Mucosa of descending colon (tissue), 3 donors: ENCODE measurements at regions of chr18 and their contacts with region 1.

Region 1: DNA sequence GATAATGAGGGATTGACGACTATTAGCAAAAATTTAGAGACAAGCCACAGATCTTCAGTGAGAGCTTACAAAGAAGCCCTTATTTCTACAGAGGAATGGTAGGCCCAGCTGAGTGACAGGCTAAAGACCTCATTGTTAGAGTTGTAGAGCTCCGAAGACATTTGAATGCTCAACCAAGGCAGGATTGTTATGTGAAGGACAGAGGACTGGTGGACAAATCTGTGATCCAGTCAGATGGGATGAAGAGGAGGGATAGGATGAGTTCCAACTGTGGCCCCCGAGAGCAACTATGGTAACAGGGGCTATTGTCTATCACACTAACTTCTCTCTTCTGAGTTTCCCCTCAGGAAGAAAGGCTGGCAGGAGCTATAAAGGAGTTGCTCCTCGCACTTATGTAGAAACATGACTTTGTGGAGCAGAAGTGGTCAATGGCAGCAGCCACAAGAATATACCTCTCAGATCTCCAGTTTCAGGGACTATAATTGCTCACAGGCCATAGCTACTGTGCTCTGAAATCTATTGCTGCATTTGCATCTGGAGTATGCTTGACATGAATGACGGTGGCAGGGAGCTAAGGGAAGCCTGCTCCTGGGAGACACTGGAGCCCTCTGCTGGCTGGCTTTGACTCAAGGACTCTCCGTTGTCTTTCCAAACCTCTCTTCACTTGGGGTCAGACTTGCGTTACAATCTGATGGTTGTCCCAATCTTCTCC is 50.3 kb upstream of the GREB1L start:
- DNase-seq: peak in 2 of 3 donors; percentile 37 to 71
- ATAC-seq: peak; percentile 67
- H3K4me3 ChIP-seq: no peak overlapping the region
- H3K4me1 ChIP-seq: no peaks in the 10 kb centered on the region
- CTCF ChIP-seq: no peak

Region 2: GRCh38 chr18:21444465-21445023 is 252.8 kb after region 1 on chr18:
- intact Hi-C with region 1: loop called (anchors 2 to 10 kb)
- DNase-seq: peak in 1 of 3 donors; percentile 61
- ATAC-seq: peak; percentile 32
- H3K4me3 ChIP-seq: no peak overlapping the region
- H3K4me1 ChIP-seq: no peaks in the 10 kb centered on the region
- CTCF ChIP-seq: peak; percentile 25

Region 3: GRCh38 chr18:21955757-21956652 is 764.3 kb after region 1 on chr18:
- intact Hi-C with region 1: loop called in 1 of 2 experiments (anchors 10 kb)
- DNase-seq: peak; percentile 72 to 93 (median 90)
- ATAC-seq: peak; percentile 94
- H3K4me3 ChIP-seq: no peak overlapping the region
- H3K4me1 ChIP-seq: no peaks in the 10 kb centered on the region
- CTCF ChIP-seq: peak; percentile 80